Posterior vena cava (tissue), 2 donors: ENCODE measurements at regions of chr17 and their contacts with region 1.

Region 1: DNA sequence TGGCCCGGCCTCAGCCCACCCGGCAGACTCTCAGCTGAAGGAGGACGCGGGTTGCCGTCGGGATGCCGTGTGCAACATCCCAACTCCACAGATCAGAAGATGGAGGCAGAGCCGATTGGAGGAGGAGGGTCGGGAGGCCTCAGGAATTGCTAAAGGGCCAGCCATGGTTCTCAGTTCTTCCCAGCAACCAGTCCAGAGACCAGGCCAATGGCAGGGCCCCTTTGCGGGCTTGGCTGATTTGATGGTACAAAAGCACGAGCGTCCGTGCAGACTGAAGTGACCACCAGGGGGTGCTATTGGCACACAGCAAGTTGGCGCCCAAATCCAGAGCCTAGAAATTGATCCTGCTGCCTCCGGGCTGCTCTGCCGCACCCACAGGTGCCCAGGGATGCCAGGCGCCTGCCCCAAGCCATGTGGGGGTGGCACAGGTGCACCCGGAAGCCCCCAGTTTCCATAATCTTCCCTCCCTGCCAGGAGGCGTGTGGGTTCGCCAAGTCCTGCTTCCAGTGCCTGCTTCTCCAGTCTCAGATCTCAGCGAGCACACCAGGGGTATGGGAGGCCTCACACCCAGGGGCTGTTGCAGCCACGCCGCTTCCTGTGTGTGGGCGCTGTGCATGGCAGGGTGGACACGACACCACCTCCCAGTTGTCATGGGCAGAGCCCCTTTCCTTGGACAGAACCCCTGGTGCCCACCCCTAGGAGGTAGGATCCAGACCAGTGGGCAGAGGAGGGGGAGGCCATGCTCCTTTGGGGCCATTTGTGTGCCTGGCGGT is 7.1 kb upstream of the TEX19 start:
- DNase-seq: peak; percentile 95

Region 2: DNA sequence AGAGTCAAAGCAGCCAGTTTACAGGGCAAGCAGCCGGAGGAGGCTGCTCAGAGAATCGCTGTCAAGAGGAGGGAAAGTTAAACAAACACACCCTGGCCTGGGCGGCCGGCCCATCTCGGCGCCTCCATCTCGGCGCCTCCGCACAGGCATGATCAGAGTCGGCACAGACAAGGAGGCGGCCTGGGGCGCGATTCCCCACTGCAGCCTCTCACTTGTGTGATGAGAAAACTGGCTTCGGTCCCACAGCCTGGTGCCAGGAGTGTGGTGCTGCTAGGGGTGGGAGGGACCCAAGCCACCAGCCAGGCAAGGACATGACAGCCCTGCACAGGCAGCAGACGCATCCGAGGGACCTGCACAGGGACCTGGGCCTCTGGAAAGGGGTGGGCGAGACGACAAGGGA is 1074.5 kb before region 1 on chr17:
- intact Hi-C with region 1: no loop called
- DNase-seq: no peak

Region 3: DNA sequence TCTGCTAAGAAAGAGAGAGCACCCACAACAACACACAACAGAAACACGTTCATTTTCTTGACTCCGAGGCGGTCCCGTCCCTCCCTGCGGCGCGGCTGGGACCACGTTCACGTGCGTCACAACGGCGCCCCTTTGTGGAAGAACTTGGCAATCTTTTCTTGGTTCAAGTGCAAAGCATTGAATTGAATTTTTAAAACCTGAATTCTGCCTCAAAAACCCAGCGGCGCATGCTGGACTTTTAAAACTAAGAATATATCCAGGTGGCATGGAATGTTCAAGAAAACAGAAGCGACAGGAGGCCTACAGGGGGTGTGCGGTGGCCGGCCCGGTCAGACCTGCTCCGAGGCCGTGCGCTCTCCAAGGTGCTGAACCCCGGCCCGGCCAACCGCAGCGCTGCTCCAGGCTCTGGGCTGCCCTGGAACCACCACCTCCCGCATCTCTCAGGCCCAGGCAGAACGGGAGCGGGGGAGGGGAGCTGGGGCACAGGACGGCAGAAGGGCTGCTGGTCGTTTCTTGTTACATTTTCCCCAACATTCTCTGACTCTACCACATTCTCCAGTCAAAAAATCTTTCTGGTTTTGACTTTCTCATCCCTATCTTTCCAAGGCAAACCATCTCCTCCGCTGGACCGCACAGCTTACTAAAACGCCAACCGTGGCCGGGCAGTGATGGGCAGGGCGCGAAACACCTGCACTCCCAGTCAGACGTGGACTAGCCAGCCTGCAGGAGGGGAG is 62.8 kb after region 1 on chr17:
- intact Hi-C with region 1: loop called (anchors 2 to 5 kb)
- DNase-seq: peak; percentile 93

Region 4: GRCh38 chr17:82668631-82669099 is 316.8 kb after region 1 on chr17:
- intact Hi-C with region 1: loop called in 1 of 2 experiments (anchors 10 kb)
- DNase-seq: peak; percentile 87

Region 5: GRCh38 chr17:82775001-82775823 is 423.3 kb after region 1 on chr17:
- intact Hi-C with region 1: loop called (anchors 10 kb)
- DNase-seq: peak; percentile 90

Region 6: DNA sequence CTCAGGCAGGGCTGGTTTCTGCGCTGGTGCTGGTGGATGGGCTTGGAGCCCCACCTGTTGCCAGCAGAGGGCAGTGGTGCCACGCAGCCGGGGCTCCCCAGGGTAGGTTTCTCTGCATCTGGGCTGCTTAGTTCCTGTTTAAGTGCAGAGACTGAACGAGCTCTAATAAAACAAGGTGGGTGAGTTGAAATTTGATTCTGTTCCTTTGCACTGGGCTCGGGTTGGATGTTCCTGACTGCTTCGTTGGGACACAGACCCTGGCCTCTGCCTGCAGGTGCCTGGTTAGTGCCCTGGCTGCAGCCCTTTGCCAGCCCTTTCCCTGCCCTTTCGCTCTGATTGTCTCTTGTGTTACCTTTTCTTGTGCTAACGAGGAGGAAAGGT is 430.0 kb after region 1 on chr17:
- intact Hi-C with region 1: loop called (anchors 10 kb)
- DNase-seq: peak; percentile 95